Aorta (tissue), 5 donors: ENCODE measurements at regions of chrX and their contacts with region 1.

Region 1: GRCh38 chrX:31658360-31658759 is 586.5 kb upstream of the FTHL17 start:
- DNase-seq: no peak
- ATAC-seq: no peak
- H3K4me3 ChIP-seq: no peak overlapping the region
- H3K27ac ChIP-seq: no peak overlapping the region
- H3K4me1 ChIP-seq: no peaks in the 10 kb centered on the region
- H3K27me3 ChIP-seq: no peaks in the 10 kb centered on the region

Region 2: GRCh38 chrX:31036895-31037294 is 621.5 kb before region 1 on chrX:
- intact Hi-C with region 1: loop called (anchors 5 to 10 kb)
- DNase-seq: peak in 1 of 2 donors; percentile 52
- ATAC-seq: no peak
- H3K4me3 ChIP-seq: no peak overlapping the region
- H3K27ac ChIP-seq: no peak overlapping the region
- H3K4me1 ChIP-seq: no peaks in the 10 kb centered on the region
- H3K27me3 ChIP-seq: no peaks in the 10 kb centered on the region

Region 3: DNA sequence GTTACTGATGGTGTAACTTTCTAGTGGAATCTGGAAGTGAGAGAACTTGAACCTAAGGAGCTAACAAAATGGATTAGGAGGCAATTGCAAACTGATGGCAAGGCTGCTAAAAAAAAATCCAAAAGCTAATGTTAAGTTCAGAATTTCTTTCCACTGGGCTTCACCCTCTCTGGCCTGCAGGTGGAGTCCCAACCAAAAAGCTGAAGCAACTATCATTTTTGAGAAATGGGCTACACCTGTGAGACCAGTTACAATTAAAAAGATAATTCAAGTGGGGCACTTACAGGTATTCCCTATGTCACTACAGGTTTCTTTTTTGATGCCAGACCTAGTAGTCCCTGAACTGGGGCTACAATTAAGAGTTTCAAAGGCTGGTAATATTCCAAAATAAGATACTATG is 444.4 kb before region 1 on chrX:
- intact Hi-C with region 1: loop called in 1 of 2 experiments (anchors 5 kb)
- DNase-seq: no peak
- ATAC-seq: no peak
- H3K4me3 ChIP-seq: no peak overlapping the region
- H3K27ac ChIP-seq: no peak overlapping the region
- H3K4me1 ChIP-seq: no peaks in the 10 kb centered on the region
- H3K27me3 ChIP-seq: no peaks in the 10 kb centered on the region

Region 4: GRCh38 chrX:31603411-31604120 is 54.8 kb before region 1 on chrX:
- intact Hi-C with region 1: no loop called
- DNase-seq: no peak
- ATAC-seq: no peak
- H3K4me3 ChIP-seq: no peak overlapping the region
- H3K27ac ChIP-seq: no peak overlapping the region
- H3K4me1 ChIP-seq: no peaks in the 10 kb centered on the region
- H3K27me3 ChIP-seq: no peaks in the 10 kb centered on the region

Region 5: GRCh38 chrX:32010207-32010606 is 351.8 kb after region 1 on chrX:
- intact Hi-C with region 1: no loop called
- DNase-seq: no peak
- ATAC-seq: no peak
- H3K4me3 ChIP-seq: no peak overlapping the region
- H3K27ac ChIP-seq: no peak overlapping the region
- H3K4me1 ChIP-seq: no peaks in the 10 kb centered on the region
- H3K27me3 ChIP-seq: no peaks in the 10 kb centered on the region